Astrocyte of the cerebellum (primary cell): ENCODE measurements at regions of chr4 and their contacts with region 1.

Region 1: DNA sequence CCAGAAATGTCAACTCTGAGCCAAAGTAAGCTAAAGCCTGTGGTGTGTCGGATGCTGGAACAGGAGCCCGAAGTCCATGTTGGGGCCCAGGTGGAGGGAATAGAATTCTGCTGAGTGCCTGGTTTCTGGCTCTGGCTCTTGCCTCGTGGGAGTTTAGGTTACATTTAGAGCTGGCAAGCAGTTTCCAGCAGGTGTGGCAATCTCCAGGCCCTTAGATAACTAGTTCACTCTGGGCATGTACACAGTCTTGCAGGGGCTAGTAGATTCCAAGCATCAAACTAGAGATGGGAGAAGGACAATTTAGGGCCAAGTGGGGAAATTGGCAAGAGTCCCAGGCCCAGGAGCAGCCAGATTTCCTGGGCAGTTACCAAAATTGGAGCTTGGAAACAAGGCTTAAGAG is 56.3 kb upstream of the STOX2 start:
- DNase-seq: no peak
- H3K4me3 ChIP-seq: no peak overlapping the region
- CTCF ChIP-seq: no peak

Region 2: DNA sequence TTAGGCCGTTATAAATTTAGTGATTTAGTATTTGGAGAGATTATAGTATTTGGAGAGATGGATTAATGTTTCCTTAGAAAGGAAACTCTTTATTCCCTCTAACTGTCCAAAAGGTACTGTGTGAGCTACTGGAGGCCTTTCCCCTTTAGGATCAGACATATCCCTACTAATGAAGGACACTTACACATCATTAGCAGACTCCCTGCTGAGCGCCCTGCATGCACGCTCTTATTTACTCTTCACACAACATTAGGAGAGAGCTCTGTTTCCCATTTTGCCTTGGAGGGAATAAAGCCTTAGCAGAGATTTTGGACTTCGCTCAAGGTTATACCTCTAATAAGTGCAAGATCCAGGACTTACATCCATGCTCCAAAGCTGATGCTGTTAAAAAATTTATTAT is 38.5 kb after region 1 on chr4:
- in situ Hi-C with region 1: no loop called
- DNase-seq: no peak
- H3K4me3 ChIP-seq: no peak overlapping the region
- CTCF ChIP-seq: no peak

Region 3: GRCh38 chr4:184168406-184169019 is 319.7 kb after region 1 on chr4:
- in situ Hi-C with region 1: loop called (anchors 5 kb)
- DNase-seq: peak; percentile 16
- H3K4me3 ChIP-seq: no peak overlapping the region
- CTCF ChIP-seq: peak; percentile 96